ENCODE measurements at regions of chr1 and their contacts with region 1.

Region 1: DNA sequence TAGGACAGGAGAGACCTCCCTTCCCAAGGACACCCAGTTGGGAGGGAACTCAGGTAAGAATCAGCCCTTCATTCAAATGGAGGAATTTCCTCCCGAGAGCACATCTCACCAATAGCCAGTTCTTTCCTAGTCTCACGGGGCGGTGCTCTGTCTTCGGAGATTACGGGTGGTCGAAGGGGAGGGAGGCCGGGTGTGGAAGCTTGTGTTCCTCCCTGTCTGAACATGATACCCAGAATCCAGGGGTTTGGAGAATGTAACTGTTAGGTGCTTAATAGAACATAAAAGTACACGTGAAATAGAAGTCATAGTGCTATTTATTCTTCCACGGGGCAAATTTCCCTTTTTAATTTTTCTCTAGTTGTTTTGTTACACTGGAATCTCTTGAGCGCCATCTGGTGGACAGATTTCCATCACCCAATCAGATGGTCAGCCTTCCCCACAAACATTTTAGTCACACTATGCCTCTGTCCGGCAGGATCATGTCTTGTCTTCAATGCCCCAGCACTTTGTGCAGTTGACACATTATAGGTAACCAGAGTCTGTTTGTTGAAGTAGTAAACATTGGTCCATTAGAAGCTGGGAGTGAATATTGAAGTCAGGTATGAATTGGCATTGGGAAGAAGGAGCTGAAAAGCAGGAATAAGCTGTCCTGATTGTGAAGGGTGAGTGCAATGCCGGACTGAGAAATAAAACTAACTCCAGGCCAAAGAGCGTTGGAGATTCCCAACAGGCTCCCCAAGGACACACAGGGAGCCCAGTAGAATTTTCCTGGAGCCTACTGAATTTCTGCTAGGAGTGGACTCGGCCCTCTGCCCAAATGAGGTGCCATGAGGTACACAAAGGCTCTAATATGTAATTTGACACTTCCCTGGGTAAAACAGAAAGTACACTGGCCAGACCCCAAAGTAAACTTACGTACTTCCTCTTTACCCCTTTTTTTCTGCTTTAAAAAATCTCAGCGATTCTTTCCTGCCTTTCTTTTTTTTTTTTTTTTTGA is 27.6 kb upstream of the ZNF697 start:
- DNase-seq: peak; percentile 78
- H3K4me3 ChIP-seq: peak overlapping the region; percentile 57
- H3K27ac ChIP-seq: no peak overlapping the region
- H3K27me3 ChIP-seq: peaks cover 8% of the 10 kb centered on the region
- CTCF ChIP-seq: peak; percentile 85

Region 2: DNA sequence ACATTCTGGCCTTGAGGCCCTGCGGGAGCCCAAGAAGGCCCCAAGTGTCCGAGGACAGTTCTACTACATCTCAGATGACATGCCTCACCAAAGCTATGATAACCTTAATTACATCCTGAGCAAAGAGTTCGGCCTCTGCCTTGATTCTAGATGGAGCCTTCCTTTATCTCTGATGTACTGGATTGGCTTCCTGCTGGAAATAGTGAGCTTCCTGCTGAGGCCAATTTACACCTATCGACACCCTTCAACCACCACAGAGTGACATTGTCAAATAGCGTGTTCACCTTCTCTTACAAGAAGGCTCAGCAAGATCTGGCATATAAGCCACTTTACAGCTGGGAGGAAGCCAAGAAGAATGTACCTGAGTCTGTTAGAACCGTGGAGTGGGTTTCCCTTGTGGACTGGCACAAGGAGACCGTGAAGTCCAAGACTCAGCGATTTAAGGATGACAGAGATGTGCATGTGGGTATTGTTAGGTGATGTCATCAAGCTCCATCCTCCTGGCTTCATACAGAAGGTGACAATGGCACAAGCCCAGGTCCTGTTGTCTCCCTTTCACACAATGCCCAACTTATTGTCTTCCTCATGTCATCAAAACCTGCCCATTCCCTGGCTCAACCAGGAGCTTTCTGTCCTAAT is 66.7 kb before region 1 on chr1:
- CTCF ChIA-PET with region 1: interaction called, 107 read pairs
- POLR2A ChIA-PET with region 1: interaction called, 3 read pairs
- DNase-seq: no peak
- H3K4me3 ChIP-seq: no peak overlapping the region
- H3K27ac ChIP-seq: no peak overlapping the region
- H3K27me3 ChIP-seq: peaks cover 3% of the 10 kb centered on the region
- CTCF ChIP-seq: no peak

Region 3: DNA sequence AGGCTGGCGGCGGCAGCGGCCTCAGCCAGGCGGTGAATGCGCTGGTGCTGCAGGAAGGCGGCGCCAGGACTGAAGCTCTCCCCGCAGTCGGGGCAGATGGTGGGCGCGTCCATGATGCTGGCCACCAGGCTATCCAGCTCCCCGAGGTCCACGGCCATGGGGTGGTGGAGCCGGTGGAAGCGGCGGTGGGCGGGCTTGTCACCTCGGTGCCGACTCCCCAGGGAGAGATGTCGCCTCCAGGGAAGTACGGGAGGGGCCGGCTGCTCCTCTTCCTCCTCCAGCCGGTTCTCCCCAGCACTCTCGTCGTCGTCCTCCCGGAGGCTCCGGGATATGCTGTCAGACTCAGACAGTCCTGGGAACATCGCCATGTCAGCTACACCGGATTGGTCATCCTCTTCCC is 52.0 kb before region 1 on chr1:
- CTCF ChIA-PET with region 1: interaction called, 37 read pairs
- POLR2A ChIA-PET with region 1: no interaction called
- DNase-seq: no peak
- H3K4me3 ChIP-seq: no peak overlapping the region
- H3K27ac ChIP-seq: no peak overlapping the region
- H3K27me3 ChIP-seq: no peaks in the 10 kb centered on the region
- CTCF ChIP-seq: no peak

Region 4: GRCh38 chr1:119647734-119648619 is 27.7 kb before region 1 on chr1 and contains the start of gene ZNF697:
- CTCF ChIA-PET with region 1: interaction called, 57 read pairs
- POLR2A ChIA-PET with region 1: interaction called, 4 read pairs
- DNase-seq: peak; percentile 95
- H3K4me3 ChIP-seq: peak within 1 kb of the TSS; percentile 98
- H3K27ac ChIP-seq: peak within 1 kb of the TSS; percentile 91
- H3K27me3 ChIP-seq: peaks cover 4% of the 10 kb centered on the region
- CTCF ChIP-seq: peak; percentile 59
- polyA plus RNA-seq, gene ZNF697: 11.6 and 12.9 TPM in 2 replicates

Region 5: GRCh38 chr1:119662034-119662437 is 13.6 kb before region 1 on chr1:
- CTCF ChIA-PET with region 1: interaction called, 72 read pairs
- POLR2A ChIA-PET with region 1: no interaction called
- DNase-seq: no peak
- H3K4me3 ChIP-seq: no peak overlapping the region
- H3K27ac ChIP-seq: no peak overlapping the region
- H3K27me3 ChIP-seq: peaks cover 3% of the 10 kb centered on the region
- CTCF ChIP-seq: no peak

Region 6: GRCh38 chr1:119702384-119702783 is 26.7 kb after region 1 on chr1:
- CTCF ChIA-PET with region 1: interaction called, 13 read pairs
- POLR2A ChIA-PET with region 1: no interaction called
- DNase-seq: no peak
- H3K4me3 ChIP-seq: no peak overlapping the region
- H3K27ac ChIP-seq: no peak overlapping the region
- H3K27me3 ChIP-seq: peaks cover 11% of the 10 kb centered on the region
- CTCF ChIP-seq: no peak

Region 7: DNA sequence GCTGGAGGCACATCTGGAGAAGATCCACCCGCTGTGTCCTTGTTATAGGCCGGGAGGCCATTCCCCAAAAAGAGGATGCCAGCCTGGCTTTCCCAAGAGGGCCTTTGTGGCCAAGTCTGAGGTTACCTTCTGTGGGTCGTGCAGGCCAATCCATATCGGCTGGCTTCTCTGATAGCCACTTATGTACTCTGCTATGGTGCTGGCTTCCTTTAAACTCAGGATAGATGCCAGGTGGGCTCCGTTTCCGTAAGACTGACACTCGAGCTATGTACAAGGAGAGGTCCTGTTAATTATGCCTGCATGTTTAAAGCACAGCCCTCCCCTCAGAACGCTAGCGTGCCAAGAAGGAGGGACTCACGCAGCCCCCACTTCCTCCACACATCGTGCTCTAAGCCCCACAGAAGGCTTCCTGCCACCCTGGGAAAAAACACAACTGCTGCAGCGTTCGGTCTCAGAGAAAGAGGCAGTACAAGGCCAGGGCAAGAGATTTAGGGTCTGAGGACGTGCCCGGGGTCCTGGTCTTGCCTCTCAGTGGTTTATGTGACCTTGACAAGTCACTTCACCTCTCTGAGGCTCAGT is 124.0 kb after region 1 on chr1:
- CTCF ChIA-PET with region 1: no interaction called
- POLR2A ChIA-PET with region 1: no interaction called
- DNase-seq: no peak
- H3K4me3 ChIP-seq: no peak overlapping the region
- H3K27ac ChIP-seq: no peak overlapping the region
- H3K27me3 ChIP-seq: peaks cover 4% of the 10 kb centered on the region
- CTCF ChIP-seq: no peak

Measured in AG04450 (cell line).